Transverse colon (tissue), 4 donors: ENCODE measurements at regions of chr14 and their contacts with region 1.

Region 1: GRCh38 chr14:70027785-70028428 is 148.7 kb downstream of the SMOC1 start:
- DNase-seq: peak; percentile 71
- H3K4me3 ChIP-seq: no peak overlapping the region
- H3K27ac ChIP-seq: no peak overlapping the region
- H3K4me1 ChIP-seq: no peaks in the 10 kb centered on the region
- H3K27me3 ChIP-seq: peaks cover 4% of the 10 kb centered on the region
- CTCF ChIP-seq: peak; percentile 78 to 85 (median 80)
- EP300 ChIP-seq: no peak
- POLR2A ChIP-seq: no peak

Region 2: GRCh38 chr14:69818757-69819191 is 209.1 kb before region 1 on chr14:
- in situ Hi-C with region 1: loop called (anchors 5 to 10 kb)
- intact Hi-C with region 1: loop called (anchors 5 kb)
- DNase-seq: peak; percentile 19
- H3K4me3 ChIP-seq: no peak overlapping the region
- H3K27ac ChIP-seq: no peak overlapping the region
- H3K4me1 ChIP-seq: no peaks in the 10 kb centered on the region
- H3K27me3 ChIP-seq: peaks cover 13% of the 10 kb centered on the region
- CTCF ChIP-seq: peak; percentile 86 to 93 (median 89)
- EP300 ChIP-seq: no peak
- POLR2A ChIP-seq: no peak

Region 3: GRCh38 chr14:69827560-69827959 is 200.3 kb before region 1 on chr14:
- in situ Hi-C with region 1: loop called in 2 of 4 experiments (anchors 5 to 10 kb)
- intact Hi-C with region 1: loop called (anchors 5 kb)
- DNase-seq: no peak
- H3K4me3 ChIP-seq: no peak overlapping the region
- H3K27ac ChIP-seq: no peak overlapping the region
- H3K4me1 ChIP-seq: no peaks in the 10 kb centered on the region
- H3K27me3 ChIP-seq: no peaks in the 10 kb centered on the region
- CTCF ChIP-seq: no peak
- EP300 ChIP-seq: no peak
- POLR2A ChIP-seq: no peak

Region 4: GRCh38 chr14:69972755-69973154 is 55.2 kb before region 1 on chr14:
- in situ Hi-C with region 1: loop called in 1 of 4 experiments (anchors 5 kb)
- intact Hi-C with region 1: no loop called
- DNase-seq: no peak
- H3K4me3 ChIP-seq: no peak overlapping the region
- H3K27ac ChIP-seq: no peak overlapping the region
- H3K4me1 ChIP-seq: peaks cover 0 to 5% (median 0%) of the 10 kb centered on the region in 4 donors
- H3K27me3 ChIP-seq: no peaks in the 10 kb centered on the region
- CTCF ChIP-seq: no peak
- EP300 ChIP-seq: no peak
- POLR2A ChIP-seq: no peak

Region 5: DNA sequence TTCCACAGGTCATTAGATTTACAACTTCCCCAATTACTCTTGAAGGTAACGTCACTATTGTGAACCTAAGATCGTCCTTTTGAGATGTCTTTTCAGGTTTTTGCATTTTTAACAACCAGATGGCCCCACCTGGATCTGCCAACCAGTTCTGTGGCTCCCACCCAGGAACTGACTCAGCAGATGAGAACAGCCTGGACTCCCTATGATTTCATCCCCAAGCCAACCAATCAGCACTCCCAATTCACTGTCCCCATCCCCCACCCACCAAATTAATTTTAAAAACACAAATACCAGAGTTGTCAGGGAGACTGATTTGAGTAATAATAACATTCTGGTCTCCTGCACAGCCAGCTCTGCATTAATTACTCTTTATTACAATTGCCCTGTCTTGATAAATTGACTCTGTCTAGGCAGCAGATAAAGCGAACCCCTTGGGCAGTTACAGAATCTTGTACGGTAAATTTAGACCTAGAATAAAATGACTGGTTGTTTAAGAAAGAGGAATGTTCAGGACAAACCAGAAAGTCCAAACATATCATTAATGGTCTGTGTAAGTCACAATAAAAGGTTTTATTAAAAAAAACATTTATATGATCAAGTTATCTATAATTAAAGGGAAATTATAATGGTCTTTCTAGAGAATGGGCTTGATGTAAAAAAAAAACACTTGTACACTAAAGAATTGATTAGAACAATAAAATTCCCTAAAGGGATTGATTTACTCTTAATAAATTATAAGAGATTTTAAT is 275.8 kb after region 1 on chr14:
- in situ Hi-C with region 1: no loop called
- intact Hi-C with region 1: no loop called
- DNase-seq: no peak
- H3K4me3 ChIP-seq: no peak overlapping the region
- H3K27ac ChIP-seq: no peak overlapping the region
- H3K4me1 ChIP-seq: no peaks in the 10 kb centered on the region
- H3K27me3 ChIP-seq: no peaks in the 10 kb centered on the region
- CTCF ChIP-seq: no peak
- EP300 ChIP-seq: no peak
- POLR2A ChIP-seq: no peak